ENCODE measurements at regions of chr17 and their contacts with region 1.

Region 1: DNA sequence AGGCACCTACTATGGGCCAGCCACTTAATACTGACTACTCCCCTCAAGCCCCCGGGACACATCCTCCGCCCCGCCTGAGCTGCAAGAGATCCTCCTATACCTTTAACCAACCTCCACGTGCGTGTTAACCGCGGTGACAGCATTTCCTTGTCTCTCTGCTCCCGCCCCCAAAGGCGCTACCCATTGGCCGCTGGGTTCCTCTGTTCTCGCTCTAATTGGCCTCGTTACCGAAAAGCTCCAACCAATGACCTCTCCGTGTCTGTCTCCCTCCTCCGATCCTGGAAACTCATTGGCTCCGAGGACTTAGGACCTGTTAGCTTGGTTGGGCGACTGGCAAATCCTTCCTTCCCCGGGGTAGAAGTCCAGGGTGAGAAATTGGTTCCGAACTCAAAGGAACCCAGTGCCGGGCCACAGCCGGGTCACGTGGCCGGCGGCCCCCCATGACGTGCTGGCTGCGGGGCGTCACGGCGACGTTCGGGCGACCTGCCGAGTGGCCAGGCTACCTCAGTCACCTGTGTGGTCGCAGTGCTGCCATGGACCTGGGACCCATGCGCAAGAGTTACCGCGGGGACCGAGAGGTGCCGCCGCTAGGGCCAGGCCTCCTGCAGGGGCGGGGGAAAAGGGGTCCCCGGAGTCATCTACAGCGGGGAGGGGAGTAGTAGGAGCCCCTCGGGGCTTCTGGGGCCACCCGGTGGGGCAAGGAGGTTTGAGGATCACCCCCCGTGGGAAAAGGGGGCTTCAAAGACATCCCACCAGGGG is at the start of gene PNPO:
- DNase-seq: peak; percentile 97
- H3K4me3 ChIP-seq: peak within 1 kb of the TSS; percentile 66 to 97
- H3K27ac ChIP-seq: peak within 1 kb of the TSS; percentile 67 to 90
- H3K4me1 ChIP-seq: peaks cover 0 to 37% (median 19%) of the 10 kb centered on the region in 4 donors
- H3K27me3 ChIP-seq: no peaks in the 10 kb centered on the region
- CTCF ChIP-seq: no peak

Region 2: GRCh38 chr17:47884905-47885733 is 56.3 kb before region 1 on chr17:
- intact Hi-C with region 1: no loop called
- DNase-seq: no peak
- H3K4me3 ChIP-seq: no peak overlapping the region
- H3K27ac ChIP-seq: no peak overlapping the region
- H3K4me1 ChIP-seq: peaks cover 0 to 26% (median 0%) of the 10 kb centered on the region in 4 donors
- H3K27me3 ChIP-seq: no peaks in the 10 kb centered on the region
- CTCF ChIP-seq: no peak

Region 3: DNA sequence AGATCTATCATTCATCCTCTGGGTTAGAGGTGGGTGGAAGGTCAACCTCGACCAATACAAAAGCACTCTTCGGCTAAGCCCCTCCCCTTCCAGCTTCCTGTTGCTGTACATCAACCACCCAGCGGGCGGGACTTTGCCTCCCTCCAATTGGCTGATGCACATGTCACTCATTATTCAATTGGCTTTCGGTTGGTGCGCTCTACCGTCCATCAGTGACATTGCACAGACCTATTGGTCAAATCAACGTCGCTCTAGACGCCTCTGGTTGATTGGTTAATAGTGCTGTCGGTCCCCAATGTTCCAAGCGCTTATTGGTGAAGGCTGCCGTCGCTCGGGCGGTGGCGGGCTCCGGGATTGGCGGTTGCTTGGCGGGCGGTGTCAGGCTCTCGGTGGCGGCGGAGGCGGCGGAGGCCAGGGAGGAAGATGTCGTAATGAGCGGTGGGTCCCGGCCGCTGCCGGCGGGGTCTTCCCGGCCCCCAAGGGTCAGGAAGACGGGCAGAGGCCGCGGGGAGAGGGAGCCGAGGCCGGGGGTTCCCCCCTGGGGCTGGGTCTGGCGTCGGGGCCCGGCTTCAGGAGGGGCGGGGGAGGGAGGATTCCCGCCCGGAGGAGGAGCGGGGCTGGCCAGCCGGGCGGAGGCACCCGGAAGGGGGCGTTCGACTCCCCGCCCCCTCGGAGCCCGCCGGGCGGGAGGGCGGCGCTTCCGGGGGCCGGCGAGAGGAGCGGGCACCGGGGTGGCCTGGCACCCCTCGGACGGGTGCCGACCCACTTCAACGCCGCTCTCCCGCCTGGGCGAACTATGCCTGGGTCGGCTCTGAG is 45.4 kb before region 1 on chr17 and contains the start of gene SP2:
- intact Hi-C with region 1: loop called (anchors 5 kb)
- DNase-seq: peak; percentile 100
- H3K4me3 ChIP-seq: peak within 1 kb of the TSS; percentile 67 to 77
- H3K27ac ChIP-seq: peak within 1 kb of the TSS; percentile 99 to 100
- H3K4me1 ChIP-seq: peaks cover 0 to 53% (median 44%) of the 10 kb centered on the region in 4 donors
- H3K27me3 ChIP-seq: no peaks in the 10 kb centered on the region
- CTCF ChIP-seq: peak; percentile 12 to 76